Endothelial cell of umbilical vein (primary cell): ENCODE measurements at regions of chr1 and their contacts with region 1.

Region 1: GRCh38 chr1:205658943-205659581 is 21.2 kb downstream of the SLC45A3 start:
- DNase-seq: peak; percentile 70
- H3K4me3 ChIP-seq: no peak overlapping the region
- H3K27ac ChIP-seq: no peak overlapping the region
- H3K4me1 ChIP-seq: peaks cover 16% of the 10 kb centered on the region
- H3K27me3 ChIP-seq: no peaks in the 10 kb centered on the region
- CTCF ChIP-seq: peak; percentile 89 to 91
- POLR2A ChIP-seq: no peak

Region 2: GRCh38 chr1:205354259-205354904 is 304.7 kb before region 1 on chr1:
- CTCF ChIA-PET with region 1: interaction called, 11 read pairs
- POLR2A ChIA-PET with region 1: no interaction called
- dilution Hi-C with region 1: no loop called
- intact Hi-C with region 1: no loop called
- DNase-seq: peak; percentile 63
- H3K4me3 ChIP-seq: no peak overlapping the region
- H3K27ac ChIP-seq: no peak overlapping the region
- H3K4me1 ChIP-seq: no peaks in the 10 kb centered on the region
- H3K27me3 ChIP-seq: peaks cover 4 to 30% of the 10 kb centered on the region in 2 experiments
- CTCF ChIP-seq: peak; percentile 66 to 69
- POLR2A ChIP-seq: no peak

Region 3: DNA sequence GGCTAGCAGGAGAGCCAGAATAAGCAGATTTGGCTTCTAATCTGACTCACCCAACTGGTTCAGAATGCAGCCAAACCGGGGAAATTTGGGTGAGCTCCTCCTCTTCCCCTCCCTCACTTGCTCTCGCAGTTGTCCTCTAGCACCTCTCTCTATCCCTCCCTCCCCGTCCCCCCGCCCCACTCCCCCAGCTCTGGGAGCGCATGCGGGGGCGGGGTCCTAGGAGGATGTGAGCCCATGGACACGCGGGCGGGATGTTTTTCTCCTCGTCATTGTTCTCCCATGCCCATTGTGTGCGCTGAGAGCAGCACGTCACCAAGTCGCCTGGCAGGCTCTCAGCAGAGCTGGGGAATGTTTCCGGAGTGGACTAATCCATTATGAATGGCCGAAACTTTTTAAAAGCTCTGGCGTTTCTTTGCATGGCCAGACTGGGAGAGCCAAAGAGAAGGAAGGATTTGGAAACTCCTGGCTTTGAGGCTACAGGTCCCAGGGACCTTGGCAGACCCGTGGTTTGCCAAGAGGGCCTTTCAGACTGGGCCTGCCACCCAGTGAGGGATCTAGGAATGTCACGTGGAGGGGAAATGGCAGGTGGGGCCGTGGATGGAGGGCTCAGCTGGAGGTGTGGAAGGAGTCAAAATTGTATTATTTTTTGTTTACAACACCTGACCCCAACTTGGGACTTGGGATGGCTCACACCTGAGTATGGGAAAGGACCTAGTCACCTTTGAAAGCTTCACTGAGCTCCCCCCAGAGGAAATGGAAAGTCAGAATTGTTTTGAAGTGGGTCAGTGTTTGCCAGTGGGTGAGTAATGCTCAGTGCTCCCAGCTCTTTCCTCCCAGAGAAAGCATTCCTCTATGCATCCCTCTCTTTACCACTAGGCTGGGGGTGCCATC is 115.4 kb before region 1 on chr1:
- CTCF ChIA-PET with region 1: interaction called, 292 read pairs
- POLR2A ChIA-PET with region 1: interaction called, 3 read pairs
- dilution Hi-C with region 1: no loop called
- intact Hi-C with region 1: no loop called
- DNase-seq: peak; percentile 95
- H3K4me3 ChIP-seq: peak overlapping the region in 2 of 3 experiments; percentile 32 to 39
- H3K27ac ChIP-seq: peak overlapping the region; percentile 98
- H3K4me1 ChIP-seq: peaks cover 9% of the 10 kb centered on the region
- H3K27me3 ChIP-seq: peaks cover 2 to 5% of the 10 kb centered on the region in 2 experiments
- CTCF ChIP-seq: peak in 1 of 2 donors; percentile 5
- POLR2A ChIP-seq: no peak

Region 4: DNA sequence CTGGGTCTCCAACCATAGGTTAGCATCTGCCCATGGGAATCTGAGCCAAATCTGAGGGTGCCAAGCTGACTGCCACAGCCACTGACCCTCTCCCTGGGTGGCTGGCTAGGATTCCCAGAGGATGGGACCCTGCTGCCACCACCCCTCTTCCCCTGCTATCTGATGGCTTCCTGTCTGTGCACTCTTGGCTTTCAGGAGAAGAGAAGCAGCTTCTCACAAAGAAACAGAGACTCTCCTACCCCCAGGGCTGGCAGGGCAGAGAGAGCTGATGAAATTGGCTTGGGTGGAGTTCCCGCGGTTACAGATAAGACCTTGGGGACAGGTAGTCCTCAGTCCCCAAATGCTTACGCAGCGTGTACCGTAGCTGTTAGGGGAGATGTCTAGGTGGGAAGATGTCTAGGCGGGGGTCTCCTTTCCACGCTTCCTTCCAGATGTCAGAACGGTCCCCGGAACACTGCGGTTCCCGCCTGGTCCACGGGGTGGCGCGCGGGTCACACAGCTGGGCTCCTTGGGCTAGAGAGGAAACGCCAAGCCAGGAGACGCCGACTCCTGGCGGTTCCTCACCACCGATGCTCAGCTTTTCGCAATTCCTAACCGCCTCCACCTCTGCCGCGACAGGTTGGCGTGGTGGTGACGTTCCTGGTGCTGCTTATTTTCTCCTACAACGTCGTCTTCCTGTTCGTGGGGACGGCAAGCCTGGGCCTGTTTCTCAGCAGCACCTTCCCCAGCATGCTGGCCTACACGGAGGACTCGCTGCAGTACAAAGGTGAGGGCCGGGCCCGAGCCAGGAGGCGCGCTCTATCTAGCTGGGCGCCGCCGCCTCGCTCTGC is 67.3 kb before region 1 on chr1:
- CTCF ChIA-PET with region 1: interaction called, 615 read pairs
- POLR2A ChIA-PET with region 1: interaction called, 3 read pairs
- dilution Hi-C with region 1: no loop called
- intact Hi-C with region 1: loop called (anchors 1 kb)
- DNase-seq: peak; percentile 83
- H3K4me3 ChIP-seq: peak overlapping the region in 1 of 3 experiments; percentile 11
- H3K27ac ChIP-seq: no peak overlapping the region
- H3K4me1 ChIP-seq: peaks cover 8% of the 10 kb centered on the region
- H3K27me3 ChIP-seq: no peaks in the 10 kb centered on the region
- CTCF ChIP-seq: peak; percentile 95 to 97
- POLR2A ChIP-seq: no peak

Region 5: GRCh38 chr1:205645519-205645918 is 13.5 kb before region 1 on chr1:
- CTCF ChIA-PET with region 1: interaction called, 25 read pairs
- POLR2A ChIA-PET with region 1: no interaction called
- dilution Hi-C with region 1: no loop called
- intact Hi-C with region 1: no loop called
- DNase-seq: no peak
- H3K4me3 ChIP-seq: no peak overlapping the region
- H3K27ac ChIP-seq: no peak overlapping the region
- H3K4me1 ChIP-seq: no peaks in the 10 kb centered on the region
- H3K27me3 ChIP-seq: no peaks in the 10 kb centered on the region
- CTCF ChIP-seq: no peak
- POLR2A ChIP-seq: no peak

Region 6: DNA sequence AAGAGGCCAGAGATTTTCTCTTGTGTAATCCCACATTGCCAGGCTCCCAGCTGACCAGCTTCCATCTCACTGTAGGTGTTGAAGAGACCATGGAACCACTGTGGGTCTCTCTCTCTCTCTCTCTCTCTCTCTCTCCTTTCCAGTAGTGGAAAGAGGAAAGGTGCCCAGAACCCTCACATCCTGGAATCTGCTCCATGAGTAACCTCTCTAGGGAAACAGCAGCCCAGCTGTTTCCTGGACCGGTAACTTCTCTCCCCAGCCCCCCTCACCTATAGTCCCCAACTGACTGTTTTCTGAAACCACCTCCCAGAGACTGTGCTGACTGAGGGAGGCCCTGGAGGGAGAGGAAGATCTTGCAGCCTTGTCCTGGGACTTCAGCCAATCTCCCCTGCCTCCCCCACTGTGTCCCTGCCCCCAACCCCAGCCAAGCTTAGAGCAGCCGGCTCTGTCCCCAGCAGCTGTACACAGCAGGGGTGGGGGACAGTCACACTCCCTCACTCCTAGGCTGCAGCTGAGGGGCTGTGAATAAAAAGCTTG is 41.9 kb after region 1 on chr1:
- CTCF ChIA-PET with region 1: interaction called, 908 read pairs
- POLR2A ChIA-PET with region 1: no interaction called
- dilution Hi-C with region 1: no loop called
- intact Hi-C with region 1: no loop called
- DNase-seq: peak; percentile 90
- H3K4me3 ChIP-seq: no peak overlapping the region
- H3K27ac ChIP-seq: peak overlapping the region; percentile 20
- H3K4me1 ChIP-seq: peaks cover 16% of the 10 kb centered on the region
- H3K27me3 ChIP-seq: no peaks in the 10 kb centered on the region
- CTCF ChIP-seq: no peak
- POLR2A ChIP-seq: no peak

Region 7: GRCh38 chr1:205791568-205792180 is 132.6 kb after region 1 on chr1:
- CTCF ChIA-PET with region 1: interaction called, 15 read pairs
- POLR2A ChIA-PET with region 1: no interaction called
- dilution Hi-C with region 1: no loop called
- intact Hi-C with region 1: loop called (anchors 1 kb)
- DNase-seq: peak; percentile 53
- H3K4me3 ChIP-seq: no peak overlapping the region
- H3K27ac ChIP-seq: no peak overlapping the region
- H3K4me1 ChIP-seq: no peaks in the 10 kb centered on the region
- H3K27me3 ChIP-seq: no peaks in the 10 kb centered on the region
- CTCF ChIP-seq: peak; percentile 71 to 86
- POLR2A ChIP-seq: no peak